ENCODE measurements at regions of chr11 and their contacts with region 1.

Region 1: GRCh38 chr11:65013692-65014145 is 241 bp upstream of the ARL2 start:
- DNase-seq: peak; percentile 94
- H3K4me3 ChIP-seq: peak overlapping the region; percentile 55 to 88
- H3K27ac ChIP-seq: peak overlapping the region; percentile 90 to 98
- H3K4me1 ChIP-seq: no peaks in the 10 kb centered on the region
- H3K27me3 ChIP-seq: no peaks in the 10 kb centered on the region
- CTCF ChIP-seq: peak in 1 of 3 experiments; percentile 4
- POLR2A ChIP-seq: no peak

Region 2: GRCh38 chr11:65117216-65118096 is 103.7 kb after region 1 on chr11 and contains the start of gene ZNHIT2:
- intact Hi-C with region 1: loop called (anchors 10 kb)
- DNase-seq: peak; percentile 100
- H3K4me3 ChIP-seq: peak within 1 kb of the TSS; percentile 81 to 84
- H3K27ac ChIP-seq: peak within 1 kb of the TSS; percentile 27 to 82
- H3K4me1 ChIP-seq: peaks cover 22% of the 10 kb centered on the region
- H3K27me3 ChIP-seq: no peaks in the 10 kb centered on the region
- CTCF ChIP-seq: peak; percentile 98 to 99 (median 99)
- POLR2A ChIP-seq: no peak
- total RNA-seq, gene ZNHIT2: 64.2 to 119 TPM